Activated CD8-positive, alpha-beta memory T cell treated with anti-CD3 and anti-CD28 coated beads, Interleukin-2, amount 10 ng/mL, durations not matched to agents 7 days and 5 days (primary cell): ENCODE measurements at regions of chr5 and their contacts with region 1.

Region 1: DNA sequence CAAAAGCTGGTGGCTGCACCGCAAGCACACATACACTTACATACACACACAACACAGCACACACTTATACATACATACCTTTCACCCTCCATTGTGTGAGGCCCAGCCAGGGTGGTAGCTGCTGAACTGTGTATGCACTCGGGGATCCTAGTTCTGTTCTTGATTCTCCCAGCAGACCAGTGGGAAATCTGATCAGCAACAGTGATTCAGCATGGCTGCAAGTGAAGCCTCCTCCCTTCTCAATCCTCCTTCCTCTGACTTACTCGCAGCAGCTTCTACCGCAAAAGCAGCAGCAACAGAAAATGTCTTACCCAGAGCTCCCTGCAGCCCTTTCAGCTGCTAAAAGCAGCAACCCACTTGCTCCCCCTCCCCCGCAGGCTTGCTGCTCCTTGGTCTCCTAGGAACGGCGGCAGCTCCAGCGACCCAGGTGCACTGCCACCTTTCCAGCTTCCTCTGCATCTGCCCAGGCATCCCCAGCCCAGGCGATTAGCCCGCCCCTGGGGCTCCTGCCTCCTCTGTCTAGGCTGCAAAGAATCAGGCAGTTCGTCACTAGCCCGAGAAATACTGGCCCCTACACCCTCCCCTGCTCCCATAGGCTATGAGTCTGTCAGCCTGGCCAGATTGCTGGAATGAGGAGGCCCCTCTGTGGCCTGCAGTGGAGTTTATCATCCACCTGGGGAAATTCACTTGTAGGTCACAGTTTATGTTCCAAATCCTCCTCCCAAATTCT is at the start of gene KLHL3:
- DNase-seq: peak; percentile 61
- ATAC-seq: peak; percentile 63
- H3K4me3 Mint-ChIP-seq: no peak within 1 kb of the TSS
- H3K27ac Mint-ChIP-seq: no peak within 1 kb of the TSS
- H3K4me1 Mint-ChIP-seq: peaks cover 6% of the 10 kb centered on the region
- H3K27me3 Mint-ChIP-seq: no peaks in the 10 kb centered on the region
- total RNA-seq, gene KLHL3: 3.0 to 5.7 TPM

Region 2: GRCh38 chr5:137282216-137282615 is 453.5 kb before region 1 on chr5:
- CTCF ChIA-PET with region 1: no interaction called
- DNase-seq: no peak
- ATAC-seq: no peak
- H3K4me3 Mint-ChIP-seq: no peak overlapping the region
- H3K27ac Mint-ChIP-seq: no peak overlapping the region
- H3K4me1 Mint-ChIP-seq: no peaks in the 10 kb centered on the region
- H3K27me3 Mint-ChIP-seq: peaks cover 1% of the 10 kb centered on the region

Region 3: GRCh38 chr5:137629646-137630045 is 106.1 kb before region 1 on chr5:
- CTCF ChIA-PET with region 1: interaction called, 122 read pairs
- DNase-seq: no peak
- ATAC-seq: peak; percentile 69
- H3K4me3 Mint-ChIP-seq: no peak overlapping the region
- H3K27ac Mint-ChIP-seq: no peak overlapping the region
- H3K4me1 Mint-ChIP-seq: no peaks in the 10 kb centered on the region
- H3K27me3 Mint-ChIP-seq: no peaks in the 10 kb centered on the region

Region 4: DNA sequence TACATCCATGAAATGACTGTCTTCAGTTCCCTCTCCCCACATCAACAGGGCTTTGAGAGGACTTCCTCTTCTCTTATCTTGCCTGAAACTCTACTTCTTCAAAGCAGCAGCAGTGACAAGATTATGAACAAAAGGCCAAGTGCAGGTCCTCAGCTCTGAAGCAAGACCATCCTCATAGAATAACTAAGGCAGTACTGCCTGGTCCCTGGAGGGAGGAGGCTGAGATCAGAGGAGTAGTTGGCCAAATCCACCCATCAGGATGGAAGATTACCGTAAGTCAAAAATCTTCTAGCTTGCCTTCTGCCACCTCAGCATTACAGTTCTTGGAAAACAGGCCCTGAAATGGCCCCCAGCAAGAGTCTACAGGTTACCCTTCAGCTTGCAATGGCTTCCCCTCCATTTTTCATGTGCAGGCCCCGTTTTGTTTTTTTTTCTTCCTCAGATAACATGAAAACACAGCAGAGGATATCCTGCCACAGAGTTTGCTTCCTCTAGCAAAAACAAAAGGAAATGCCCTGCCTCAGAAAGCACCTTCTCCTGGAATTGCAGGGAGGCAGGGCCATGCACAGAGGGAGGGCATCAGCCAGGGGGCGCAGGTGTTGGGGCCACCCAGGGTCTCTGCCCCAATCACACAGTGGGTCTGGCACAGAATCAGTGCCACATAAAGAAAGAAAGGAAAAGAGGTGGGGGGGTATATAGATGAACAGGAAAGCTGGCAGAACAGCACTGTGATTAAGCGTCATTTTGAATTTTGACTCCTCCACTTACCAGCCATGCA is 39.9 kb before region 1 on chr5:
- CTCF ChIA-PET with region 1: interaction called, 25 read pairs
- DNase-seq: no peak
- ATAC-seq: peak; percentile 48
- H3K4me3 Mint-ChIP-seq: peak overlapping the region; percentile 11
- H3K27ac Mint-ChIP-seq: peak overlapping the region; percentile 84
- H3K4me1 Mint-ChIP-seq: peaks cover 26% of the 10 kb centered on the region
- H3K27me3 Mint-ChIP-seq: no peaks in the 10 kb centered on the region

Region 5: GRCh38 chr5:137708796-137709559 is 26.7 kb before region 1 on chr5:
- CTCF ChIA-PET with region 1: no interaction called
- DNase-seq: no peak
- ATAC-seq: no peak
- H3K4me3 Mint-ChIP-seq: no peak overlapping the region
- H3K27ac Mint-ChIP-seq: no peak overlapping the region
- H3K4me1 Mint-ChIP-seq: no peaks in the 10 kb centered on the region
- H3K27me3 Mint-ChIP-seq: no peaks in the 10 kb centered on the region

Region 6: GRCh38 chr5:137754126-137754960 is 18.6 kb after region 1 on chr5 and contains the start of gene HNRNPA0:
- CTCF ChIA-PET with region 1: interaction called, 21 read pairs
- DNase-seq: peak; percentile 97
- ATAC-seq: peak; percentile 88
- H3K4me3 Mint-ChIP-seq: peak within 1 kb of the TSS; percentile 96
- H3K27ac Mint-ChIP-seq: peak within 1 kb of the TSS; percentile 100
- H3K4me1 Mint-ChIP-seq: peaks cover 30% of the 10 kb centered on the region
- H3K27me3 Mint-ChIP-seq: no peaks in the 10 kb centered on the region
- total RNA-seq, gene HNRNPA0: 26.0 to 34.0 TPM

Region 7: DNA sequence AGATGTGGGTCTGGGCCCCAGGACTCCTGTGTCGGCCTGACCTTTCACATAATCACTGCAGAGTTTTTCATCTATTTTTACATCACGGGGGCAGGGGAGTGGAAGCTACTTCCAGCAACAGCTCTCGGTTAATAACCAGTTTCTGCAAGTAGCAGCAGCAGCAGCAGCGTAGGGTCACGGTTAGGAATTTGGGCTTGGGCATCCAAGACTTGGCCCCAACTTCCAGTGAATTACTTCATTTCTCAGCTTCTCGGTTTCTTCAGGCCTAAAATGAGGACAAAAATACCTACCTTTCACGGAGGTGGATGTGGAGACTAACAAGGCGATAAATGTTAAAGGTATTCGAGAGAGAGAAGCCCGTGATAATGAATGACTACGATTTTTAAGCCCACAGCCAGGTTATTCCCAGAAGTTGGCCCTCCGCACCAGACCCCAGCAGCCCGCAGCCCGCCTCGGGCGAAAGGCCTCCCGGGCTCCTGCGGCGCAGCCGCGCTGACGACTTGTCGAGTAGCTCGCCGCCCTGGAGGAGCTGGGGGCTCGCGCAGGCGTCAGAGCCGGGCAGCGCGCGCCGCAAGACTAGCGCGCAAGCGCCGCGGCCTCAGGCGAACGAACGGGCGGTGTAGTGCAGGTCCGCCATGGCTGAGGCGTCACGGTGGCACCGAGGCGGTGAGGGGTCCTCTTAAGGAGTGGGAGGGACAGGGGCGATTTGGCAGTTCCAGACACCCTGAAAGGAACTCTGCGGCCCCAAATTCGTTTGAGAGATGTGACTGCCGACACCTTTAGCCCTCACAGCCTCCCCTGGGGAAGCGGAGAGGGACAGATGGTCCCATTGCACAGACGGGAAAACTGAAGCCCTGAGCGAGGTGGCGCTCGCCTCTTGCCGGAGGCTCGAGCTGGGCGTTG is 153.4 kb after region 1 on chr5 and contains the start of gene PKD2L2:
- CTCF ChIA-PET with region 1: no interaction called
- DNase-seq: peak; percentile 90
- ATAC-seq: peak; percentile 99
- H3K4me3 Mint-ChIP-seq: peak within 1 kb of the TSS; percentile 81
- H3K27ac Mint-ChIP-seq: peak within 1 kb of the TSS; percentile 93
- H3K4me1 Mint-ChIP-seq: peaks cover 23% of the 10 kb centered on the region
- H3K27me3 Mint-ChIP-seq: peaks cover 8% of the 10 kb centered on the region
- total RNA-seq, gene PKD2L2: 0.38 TPM in 1 of 2 experiments, not detected in the other